Activated naive CD4-positive, alpha-beta T cell treated with anti-CD3 and anti-CD28 coated beads for 36 hours (primary cell): ENCODE measurements at regions of chr2 and their contacts with region 1.

Region 1: DNA sequence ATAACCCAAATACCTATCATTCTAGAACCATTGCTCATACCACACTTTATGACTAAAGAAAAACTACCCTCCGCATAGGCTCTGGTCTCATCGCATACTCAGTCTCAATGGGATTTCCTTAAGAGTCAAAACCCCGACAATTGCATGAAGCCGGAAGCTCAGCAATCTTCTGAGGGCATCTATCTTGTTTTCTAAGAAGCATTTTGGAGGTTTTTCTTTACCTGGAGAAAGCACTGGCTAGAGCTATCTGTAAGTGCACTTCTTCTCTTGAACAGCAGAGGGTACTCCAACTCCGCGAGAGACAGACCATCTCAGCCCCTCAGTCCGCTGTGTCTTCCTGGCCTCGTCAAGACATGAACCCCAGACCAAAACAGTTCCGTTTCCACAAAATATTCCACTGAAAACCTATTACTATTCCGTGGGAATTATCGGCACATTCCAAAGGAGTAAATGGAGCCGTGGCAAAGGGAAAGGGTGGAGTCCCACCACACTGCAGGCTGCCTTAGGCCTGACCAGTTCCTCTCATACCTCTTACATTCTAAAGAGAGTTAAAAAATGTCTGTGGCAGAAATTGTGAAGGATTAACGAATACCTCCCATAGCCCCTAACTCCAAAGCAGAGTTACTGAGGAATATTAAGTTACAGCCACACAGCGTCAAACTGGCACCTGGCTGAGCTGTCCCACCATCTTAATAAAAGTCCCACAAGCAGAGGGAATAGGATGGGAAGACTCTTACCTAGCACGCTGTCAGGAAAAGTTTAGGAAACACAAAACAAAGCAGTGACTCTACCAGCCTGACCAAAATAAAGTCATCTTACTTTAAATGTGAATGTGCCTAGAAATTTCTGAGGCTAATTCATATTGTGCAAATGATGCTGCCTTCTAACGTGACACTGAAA is 325.6 kb upstream of the VRK2 start:
- DNase-seq: peak; percentile 54
- H3K4me3 Mint-ChIP-seq: peak overlapping the region; percentile 39
- H3K27ac Mint-ChIP-seq: no peak overlapping the region
- H3K4me1 Mint-ChIP-seq: peaks cover 8% of the 10 kb centered on the region
- H3K27me3 Mint-ChIP-seq: peaks cover 5% of the 10 kb centered on the region

Region 2: GRCh38 chr2:57549642-57550102 is 171.3 kb before region 1 on chr2:
- CTCF ChIA-PET with region 1: no interaction called
- intact Hi-C with region 1: loop called (anchors 5 kb)
- DNase-seq: peak; percentile 4
- H3K4me3 Mint-ChIP-seq: no peak overlapping the region
- H3K27ac Mint-ChIP-seq: no peak overlapping the region
- H3K4me1 Mint-ChIP-seq: peaks cover 5% of the 10 kb centered on the region
- H3K27me3 Mint-ChIP-seq: peaks cover 2% of the 10 kb centered on the region

Region 3: DNA sequence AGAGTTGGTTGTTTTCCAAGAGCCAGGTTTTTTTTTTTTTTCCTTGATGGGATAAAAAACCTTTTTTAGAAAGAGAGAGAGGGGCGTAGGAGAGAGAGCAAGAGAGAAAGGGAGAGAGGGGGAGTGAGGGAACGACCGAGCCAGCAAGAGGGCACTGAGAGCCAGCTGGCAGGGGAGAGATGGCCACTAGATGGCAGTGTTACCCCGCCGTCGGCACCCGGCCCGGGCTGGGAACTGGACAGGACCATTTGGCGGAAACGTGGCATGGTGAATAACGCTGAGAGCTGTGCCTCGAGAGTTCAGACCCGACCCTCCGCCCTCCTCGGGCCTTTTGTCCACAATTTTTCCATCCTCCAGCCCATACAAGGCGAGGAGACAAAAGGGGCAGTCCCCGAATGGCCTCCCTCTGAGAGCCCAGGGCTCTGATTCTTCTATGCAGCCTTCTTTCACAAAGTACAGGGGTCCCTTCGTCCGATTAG is 38.9 kb after region 1 on chr2:
- CTCF ChIA-PET with region 1: interaction called, 3 read pairs
- intact Hi-C with region 1: loop called (anchors 2 kb)
- DNase-seq: peak; percentile 79
- H3K4me3 Mint-ChIP-seq: no peak overlapping the region
- H3K27ac Mint-ChIP-seq: no peak overlapping the region
- H3K4me1 Mint-ChIP-seq: peaks cover 3% of the 10 kb centered on the region
- H3K27me3 Mint-ChIP-seq: peaks cover 2% of the 10 kb centered on the region